ENCODE measurements at regions of chr5 and their contacts with region 1.

Region 1: DNA sequence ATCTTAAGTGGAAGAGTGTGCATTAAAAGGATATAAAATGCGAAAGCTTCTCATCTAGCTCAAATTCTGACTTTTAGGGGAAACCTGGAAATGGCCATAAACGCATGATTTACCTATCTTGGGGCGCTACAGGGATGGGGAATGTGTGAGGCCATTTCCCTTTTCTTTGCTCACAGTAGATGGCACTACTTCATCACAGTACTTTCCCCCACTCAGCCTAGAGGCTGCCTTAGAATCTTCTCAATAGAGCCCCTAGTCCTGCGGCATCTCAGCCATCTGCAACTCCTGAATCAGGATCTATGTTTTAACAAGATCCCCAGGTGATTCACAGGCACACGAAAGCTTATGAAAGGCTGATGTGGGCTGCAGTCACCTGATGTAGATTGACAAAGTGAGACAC is 110.8 kb downstream of the LHFPL2 start:
- DNase-seq: peak; percentile 25 to 60 (median 44)
- ATAC-seq: peak; percentile 90
- H3K4me3 ChIP-seq: no peak overlapping the region
- H3K27ac ChIP-seq: no peak overlapping the region
- H3K4me1 ChIP-seq: peaks cover 11 to 14% of the 10 kb centered on the region in 2 experiments; a peak in 4 of 5 replicates
- H3K27me3 ChIP-seq: no peaks in the 10 kb centered on the region
- CTCF ChIP-seq: peak; percentile 73 to 87 (median 80)
- EP300 ChIP-seq: no peak
- POLR2A ChIP-seq: no peak
- RAD21 ChIP-seq: peak; percentile 91 to 95

Region 2: GRCh38 chr5:78359831-78360673 is 177.8 kb before region 1 on chr5 and contains the start of gene SCAMP1:
- CTCF ChIA-PET with region 1: no interaction called
- POLR2A ChIA-PET with region 1: no interaction called
- in situ Hi-C with region 1: no loop called
- intact Hi-C with region 1: loop called (anchors 5 kb)
- DNase-seq: peak; percentile 92 to 94 (median 93)
- ATAC-seq: peak; percentile 96
- H3K4me3 ChIP-seq: peak within 1 kb of the TSS; percentile 86
- H3K27ac ChIP-seq: peak within 1 kb of the TSS; percentile 88
- H3K4me1 ChIP-seq: peaks cover 10 to 19% of the 10 kb centered on the region in 2 experiments; a peak in 4 of 5 replicates
- H3K27me3 ChIP-seq: no peaks in the 10 kb centered on the region
- CTCF ChIP-seq: peak; percentile 26 to 58 (median 38); a peak in 3 of 6 replicates
- EP300 ChIP-seq: peak; percentile 42; the same call in 1 of the 2 replicates
- POLR2A ChIP-seq: peak; percentile 93
- RAD21 ChIP-seq: no peak
- polyA plus RNA-seq, gene SCAMP1: 13.2 to 13.6 TPM

Region 3: GRCh38 chr5:78483809-78484521 is 53.9 kb before region 1 on chr5:
- CTCF ChIA-PET with region 1: no interaction called
- POLR2A ChIA-PET with region 1: no interaction called
- in situ Hi-C with region 1: loop called (anchors 5 kb)
- intact Hi-C with region 1: no loop called
- DNase-seq: peak; percentile 22 to 91 (median 61)
- ATAC-seq: peak; percentile 98
- H3K4me3 ChIP-seq: no peak overlapping the region
- H3K27ac ChIP-seq: peak overlapping the region; percentile 74
- H3K4me1 ChIP-seq: peaks cover 8 to 48% of the 10 kb centered on the region in 2 experiments
- H3K27me3 ChIP-seq: no peaks in the 10 kb centered on the region
- CTCF ChIP-seq: no peak
- EP300 ChIP-seq: peak; percentile 97
- POLR2A ChIP-seq: no peak
- RAD21 ChIP-seq: no peak; a peak in 2 of 4 replicates

Region 4: GRCh38 chr5:78899922-78900362 is 362.1 kb after region 1 on chr5:
- CTCF ChIA-PET with region 1: interaction called, 4 read pairs
- POLR2A ChIA-PET with region 1: no interaction called
- in situ Hi-C with region 1: no loop called
- intact Hi-C with region 1: loop called (anchors 5 kb)
- DNase-seq: peak; percentile 55 to 74 (median 62)
- ATAC-seq: peak; percentile 86
- H3K4me3 ChIP-seq: no peak overlapping the region
- H3K27ac ChIP-seq: no peak overlapping the region
- H3K4me1 ChIP-seq: no peaks in the 10 kb centered on the region
- H3K27me3 ChIP-seq: peaks cover 0 to 4% of the 10 kb centered on the region in 2 experiments; a peak in 2 of 5 replicates
- CTCF ChIP-seq: peak; percentile 81 to 90 (median 83)
- EP300 ChIP-seq: no peak
- POLR2A ChIP-seq: no peak
- RAD21 ChIP-seq: peak; percentile 71 to 90

Region 5: DNA sequence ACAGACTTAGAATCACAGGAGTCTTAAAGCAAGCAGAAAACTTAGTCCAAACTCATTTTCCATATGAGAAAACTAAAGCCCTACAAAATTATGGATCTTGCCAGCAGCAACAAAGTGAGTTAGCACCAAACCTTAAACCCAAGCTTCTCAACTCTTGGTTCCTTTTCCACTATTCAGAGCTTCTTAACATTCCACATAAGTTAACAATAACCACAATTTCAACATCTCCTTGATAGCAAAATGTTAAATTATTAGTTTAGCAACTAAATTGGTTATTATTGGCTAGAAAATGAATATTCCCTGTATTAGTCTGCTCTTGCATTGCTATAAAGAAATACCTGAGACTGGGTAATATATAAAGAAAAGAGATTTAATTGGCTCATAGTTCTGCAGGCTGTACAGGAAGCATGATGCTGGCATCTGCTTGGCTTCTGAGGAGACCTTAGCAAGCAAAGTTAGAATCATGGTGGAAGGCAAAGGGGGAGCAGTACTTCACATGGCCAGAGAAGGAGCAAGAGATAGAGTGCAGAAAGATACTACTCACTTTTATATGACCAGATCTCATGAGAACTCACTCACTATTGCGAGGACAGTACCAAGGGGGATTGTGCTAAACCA is 473.5 kb after region 1 on chr5:
- CTCF ChIA-PET with region 1: no interaction called
- POLR2A ChIA-PET with region 1: no interaction called
- in situ Hi-C with region 1: no loop called
- intact Hi-C with region 1: loop called (anchors 5 kb)
- DNase-seq: no peak
- ATAC-seq: peak; percentile 59
- H3K4me3 ChIP-seq: no peak overlapping the region
- H3K27ac ChIP-seq: no peak overlapping the region
- H3K4me1 ChIP-seq: no peaks in the 10 kb centered on the region
- H3K27me3 ChIP-seq: peaks cover under 1 to 9% of the 10 kb centered on the region in 2 experiments; a peak in 2 of 5 replicates
- CTCF ChIP-seq: peak in 2 of 3 experiments; percentile 25 to 26; a peak in 2 of 6 replicates
- EP300 ChIP-seq: no peak
- POLR2A ChIP-seq: no peak
- RAD21 ChIP-seq: no peak